Activated CD4-positive, alpha-beta T cell treated with anti-CD3 and anti-CD28 coated beads for 36 hours (primary cell): ENCODE measurements at regions of chr12 and their contacts with region 1.

Region 1: DNA sequence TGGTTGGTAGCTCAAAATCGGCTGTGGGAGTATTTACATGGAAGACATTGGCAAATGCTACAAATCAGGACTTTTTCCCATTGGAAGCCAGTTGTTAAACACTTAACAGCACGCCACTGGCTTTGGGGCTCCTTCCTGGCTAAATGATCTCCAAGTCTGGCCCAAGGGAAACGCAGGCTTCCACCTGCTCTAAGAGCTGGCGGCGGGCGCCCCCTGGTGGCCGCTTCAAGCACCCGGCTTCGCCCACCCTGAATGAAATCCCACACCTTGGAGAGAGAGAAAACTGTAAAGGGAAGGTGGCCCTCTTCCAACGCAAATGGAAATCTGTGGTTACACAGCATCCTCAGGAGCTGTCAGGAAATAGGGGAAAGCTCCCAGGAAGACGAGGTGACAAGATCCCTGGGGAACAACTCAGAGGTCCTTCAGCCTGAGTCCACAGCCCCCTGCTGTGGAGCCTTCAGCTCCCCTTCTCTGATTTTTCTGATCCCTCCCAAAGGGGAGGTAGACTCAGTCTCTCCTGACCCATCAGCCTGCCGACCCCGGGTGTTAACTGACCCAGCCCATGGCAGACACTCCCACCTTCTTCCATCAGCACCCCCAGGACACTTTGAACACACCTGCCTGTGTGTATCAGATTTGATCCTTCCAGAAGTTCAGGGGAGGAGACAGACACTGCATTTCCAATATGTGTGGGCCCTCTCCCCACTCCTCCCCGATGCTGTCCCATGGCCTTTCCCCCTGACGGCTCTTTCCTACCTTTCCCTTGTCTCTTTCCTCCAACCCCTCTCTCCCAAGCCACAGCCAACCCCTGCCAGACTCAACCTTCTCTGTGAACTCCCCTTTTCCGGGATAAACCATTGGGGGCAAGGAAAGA is 15.4 kb downstream of the SELPLG start:
- DNase-seq: peak; percentile 88
- ATAC-seq: peak; percentile 46
- H3K4me3 Mint-ChIP-seq: no peak overlapping the region
- H3K27ac Mint-ChIP-seq: peak overlapping the region; percentile 62
- H3K4me1 Mint-ChIP-seq: peaks cover 40% of the 10 kb centered on the region
- H3K27me3 Mint-ChIP-seq: no peaks in the 10 kb centered on the region

Region 2: DNA sequence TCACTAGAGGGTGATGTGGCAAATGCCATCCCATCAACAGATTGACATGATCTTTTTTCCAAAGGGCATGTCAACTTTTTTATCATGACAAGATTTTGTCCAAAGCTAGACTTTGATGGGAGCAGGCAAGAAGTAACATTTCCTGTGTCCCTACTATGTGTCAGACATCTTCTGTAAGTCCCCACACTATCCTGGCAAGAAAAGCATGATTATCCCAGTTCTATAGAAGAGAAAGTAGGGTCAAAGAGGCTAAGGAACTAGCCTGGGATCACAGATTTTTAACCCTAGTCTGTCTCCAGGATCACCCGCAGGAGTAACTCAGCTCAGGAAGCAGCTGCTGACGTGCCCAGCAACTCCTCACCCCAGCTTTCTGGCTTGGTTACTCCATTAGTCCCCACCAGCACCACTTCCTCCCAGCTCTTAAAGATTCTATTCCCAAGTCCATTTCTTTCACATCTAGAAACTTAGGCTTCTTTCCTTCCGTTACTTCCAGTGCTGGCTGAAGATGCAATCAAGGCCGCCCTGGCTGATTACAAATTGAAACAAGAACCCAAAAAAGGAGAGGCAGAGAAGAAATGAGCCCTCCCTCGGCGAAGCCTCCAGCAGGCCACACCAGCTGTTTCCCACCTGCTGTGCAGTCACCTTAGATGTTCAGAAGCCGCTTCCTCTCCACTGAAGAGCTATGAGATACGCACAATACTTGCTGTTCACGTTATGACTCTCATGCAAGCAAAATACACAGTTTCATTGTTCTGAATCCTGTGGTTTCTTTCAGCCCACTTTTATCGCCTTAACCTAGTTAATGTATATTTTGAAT is 49.8 kb before region 1 on chr12:
- CTCF ChIA-PET with region 1: interaction called, 270 read pairs
- POLR2A ChIA-PET with region 1: interaction called, 8 read pairs
- intact Hi-C with region 1: loop called (anchors 1 kb)
- DNase-seq: peak; percentile 86
- ATAC-seq: peak; percentile 87
- H3K4me3 Mint-ChIP-seq: peak overlapping the region; percentile 29
- H3K27ac Mint-ChIP-seq: peak overlapping the region; percentile 89
- H3K4me1 Mint-ChIP-seq: peaks cover 84% of the 10 kb centered on the region
- H3K27me3 Mint-ChIP-seq: no peaks in the 10 kb centered on the region

Region 3: DNA sequence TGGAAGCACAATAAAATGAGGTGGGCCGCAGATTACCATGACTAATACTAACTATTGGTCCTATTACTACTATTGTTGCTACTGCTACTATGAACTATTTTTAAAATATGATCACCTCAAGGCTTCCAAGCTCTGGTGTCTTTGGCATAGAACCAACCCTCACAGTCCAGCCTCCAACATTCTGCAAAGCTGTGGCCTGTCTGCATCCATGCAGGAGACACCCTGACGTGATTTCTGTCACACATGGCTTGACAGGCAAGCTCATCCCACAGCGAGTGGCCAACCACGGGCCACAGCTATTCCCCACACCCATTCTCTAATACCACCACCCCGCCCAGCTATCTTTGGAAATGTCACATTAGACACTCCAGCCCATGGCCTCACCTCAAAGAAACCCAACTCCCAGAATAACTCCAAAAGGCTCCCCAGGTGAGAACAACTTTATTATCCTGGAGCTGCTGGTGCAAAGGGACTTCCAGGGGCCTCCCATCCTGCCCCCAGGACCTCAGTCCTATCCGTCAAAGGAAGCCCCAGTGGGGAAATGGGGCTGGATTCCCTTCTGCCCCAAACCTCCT is 41.6 kb before region 1 on chr12:
- CTCF ChIA-PET with region 1: interaction called, 24 read pairs
- POLR2A ChIA-PET with region 1: no interaction called
- intact Hi-C with region 1: no loop called
- DNase-seq: no peak
- ATAC-seq: no peak
- H3K4me3 Mint-ChIP-seq: no peak overlapping the region
- H3K27ac Mint-ChIP-seq: no peak overlapping the region
- H3K4me1 Mint-ChIP-seq: peaks cover 41% of the 10 kb centered on the region
- H3K27me3 Mint-ChIP-seq: peaks cover 3% of the 10 kb centered on the region

Region 4: DNA sequence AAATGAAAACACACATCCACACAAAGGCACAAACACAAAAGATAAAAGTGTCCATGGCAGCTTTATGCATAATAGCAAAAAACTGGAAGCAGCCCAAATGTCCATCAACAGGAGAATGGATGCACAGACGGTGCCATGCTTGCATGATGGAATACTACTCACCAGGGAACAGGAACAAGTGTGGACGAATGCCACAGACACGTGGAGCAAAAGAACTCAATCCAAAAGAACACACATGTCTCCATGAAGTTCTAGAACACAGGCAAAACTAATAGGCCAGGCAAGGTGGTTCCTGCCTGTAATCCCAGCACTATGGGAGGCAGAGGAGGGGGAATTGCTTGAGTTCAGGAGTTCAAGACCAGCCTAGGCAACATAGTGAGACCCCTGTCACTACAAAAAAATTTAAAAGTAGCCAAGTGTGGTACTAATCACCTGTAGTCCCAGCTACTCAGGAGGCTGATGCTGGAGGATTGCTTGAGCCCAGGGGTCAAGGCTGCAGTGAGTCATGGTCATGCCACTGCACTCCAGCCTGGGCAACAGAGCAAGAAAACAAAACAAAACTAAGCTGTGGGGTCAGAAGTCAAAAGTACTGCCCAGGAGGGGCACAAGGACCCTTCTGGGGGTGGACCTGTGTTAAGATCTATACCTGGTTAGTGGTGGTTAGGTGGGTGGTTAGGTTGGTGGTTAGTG is 13.2 kb before region 1 on chr12:
- CTCF ChIA-PET with region 1: interaction called, 13 read pairs
- POLR2A ChIA-PET with region 1: no interaction called
- intact Hi-C with region 1: no loop called
- DNase-seq: no peak
- ATAC-seq: peak; percentile 33
- H3K4me3 Mint-ChIP-seq: peak overlapping the region; percentile 38
- H3K27ac Mint-ChIP-seq: no peak overlapping the region
- H3K4me1 Mint-ChIP-seq: no peaks in the 10 kb centered on the region
- H3K27me3 Mint-ChIP-seq: no peaks in the 10 kb centered on the region

Region 5: DNA sequence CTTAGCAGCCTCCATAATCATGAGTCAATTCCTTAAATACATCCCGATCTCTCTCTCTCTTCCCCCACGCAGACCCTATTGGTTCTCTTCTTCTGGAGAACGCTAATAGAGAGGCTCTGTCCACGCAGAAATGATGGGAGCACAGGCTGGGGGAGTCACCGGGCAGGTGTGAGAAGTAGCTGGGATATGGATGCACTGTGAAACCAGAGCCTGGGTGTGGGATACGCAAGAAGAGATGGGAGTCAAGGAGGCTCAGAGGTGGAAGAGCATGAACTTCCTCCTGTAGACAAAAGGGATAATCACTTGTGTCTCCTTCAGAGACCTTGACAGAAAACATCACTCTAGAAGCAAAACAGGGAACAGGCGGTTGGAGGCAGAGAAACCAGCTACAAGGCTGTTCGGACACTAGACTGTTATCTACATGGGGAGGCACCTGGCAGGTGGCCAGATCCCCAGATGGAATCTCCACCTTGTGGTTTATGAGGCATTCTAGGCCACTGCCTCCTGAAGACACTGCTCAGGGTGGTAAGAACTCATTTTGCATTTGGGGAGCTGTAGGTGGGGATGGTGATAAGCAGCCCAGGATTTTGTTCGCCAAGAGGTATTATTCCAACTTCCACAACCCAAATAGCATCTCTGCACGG is 22.6 kb after region 1 on chr12:
- CTCF ChIA-PET with region 1: interaction called, 140 read pairs
- POLR2A ChIA-PET with region 1: interaction called, 3 read pairs
- intact Hi-C with region 1: no loop called
- DNase-seq: no peak
- ATAC-seq: no peak
- H3K4me3 Mint-ChIP-seq: no peak overlapping the region
- H3K27ac Mint-ChIP-seq: no peak overlapping the region
- H3K4me1 Mint-ChIP-seq: peaks cover 24% of the 10 kb centered on the region
- H3K27me3 Mint-ChIP-seq: no peaks in the 10 kb centered on the region

Region 6: GRCh38 chr12:108731105-108731865 is 113.0 kb after region 1 on chr12 and contains the start of gene CORO1C:
- CTCF ChIA-PET with region 1: interaction called, 6 read pairs
- POLR2A ChIA-PET with region 1: no interaction called
- intact Hi-C with region 1: loop called in 1 of 2 experiments (anchors 1 kb)
- DNase-seq: peak; percentile 98
- ATAC-seq: peak; percentile 78
- H3K4me3 Mint-ChIP-seq: peak within 1 kb of the TSS; percentile 88
- H3K27ac Mint-ChIP-seq: peak within 1 kb of the TSS; percentile 93
- H3K4me1 Mint-ChIP-seq: peaks cover 36% of the 10 kb centered on the region
- H3K27me3 Mint-ChIP-seq: no peaks in the 10 kb centered on the region
- total RNA-seq, gene CORO1C: 83.5 to 90.8 TPM